Activated T-helper 1 cell treated with anti-CD3 and anti-CD28 coated beads, Interleukin-12 subunit alpha, Interleukin-12 subunit beta, Interleukin-2, Interleukin-4 antibody, amounts not matched to agents 30 ng/mL and 10 ng/mL and 1 ng/mL, durations not matched to agents 14 hours and 24 hours and 36 hours (primary cell): ENCODE measurements at regions of chr19 and their contacts with region 1.

Region 1: DNA sequence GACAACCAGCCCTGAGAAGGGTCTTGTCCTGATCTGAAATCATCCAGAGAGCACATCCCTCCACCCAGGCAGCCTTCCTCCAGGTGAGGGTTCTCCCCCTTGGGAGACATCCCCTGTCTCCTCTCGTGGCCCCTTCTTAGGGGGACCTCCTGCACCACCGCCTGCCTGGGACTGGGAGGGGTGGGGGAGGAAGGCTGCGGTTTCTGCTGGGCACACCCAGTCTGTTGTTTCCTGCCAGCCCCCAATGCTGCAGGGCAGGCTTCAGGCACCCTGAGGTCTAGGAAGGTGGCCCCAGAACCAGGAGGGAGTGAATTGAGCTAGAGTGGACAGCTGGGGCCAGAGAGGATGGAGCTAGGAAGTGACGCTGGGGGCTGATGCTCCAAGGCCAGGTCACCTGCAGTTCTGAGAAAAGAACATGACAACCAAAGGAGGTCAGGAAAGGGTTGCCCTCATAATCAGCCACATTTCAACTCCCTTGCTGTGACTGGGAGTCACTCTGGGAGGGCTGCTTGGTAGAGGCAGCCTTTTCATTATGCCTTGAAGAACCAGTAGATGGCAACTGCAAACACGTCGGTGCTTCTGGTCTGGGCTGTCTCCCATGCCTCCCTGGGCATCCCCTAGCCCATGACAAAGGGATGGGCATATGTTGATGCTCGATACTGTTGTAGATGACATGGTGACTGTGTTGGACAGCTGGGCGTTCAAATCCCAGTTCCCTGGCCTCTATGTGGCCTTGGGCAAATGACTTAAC is 1.4 kb downstream of the ARHGEF18 start:
- DNase-seq: no peak
- H3K4me3 Mint-ChIP-seq: peak overlapping the region; percentile 87
- H3K27ac Mint-ChIP-seq: peak overlapping the region; percentile 78
- H3K4me1 Mint-ChIP-seq: peaks cover 67% of the 10 kb centered on the region
- H3K27me3 Mint-ChIP-seq: no peaks in the 10 kb centered on the region

Region 2: DNA sequence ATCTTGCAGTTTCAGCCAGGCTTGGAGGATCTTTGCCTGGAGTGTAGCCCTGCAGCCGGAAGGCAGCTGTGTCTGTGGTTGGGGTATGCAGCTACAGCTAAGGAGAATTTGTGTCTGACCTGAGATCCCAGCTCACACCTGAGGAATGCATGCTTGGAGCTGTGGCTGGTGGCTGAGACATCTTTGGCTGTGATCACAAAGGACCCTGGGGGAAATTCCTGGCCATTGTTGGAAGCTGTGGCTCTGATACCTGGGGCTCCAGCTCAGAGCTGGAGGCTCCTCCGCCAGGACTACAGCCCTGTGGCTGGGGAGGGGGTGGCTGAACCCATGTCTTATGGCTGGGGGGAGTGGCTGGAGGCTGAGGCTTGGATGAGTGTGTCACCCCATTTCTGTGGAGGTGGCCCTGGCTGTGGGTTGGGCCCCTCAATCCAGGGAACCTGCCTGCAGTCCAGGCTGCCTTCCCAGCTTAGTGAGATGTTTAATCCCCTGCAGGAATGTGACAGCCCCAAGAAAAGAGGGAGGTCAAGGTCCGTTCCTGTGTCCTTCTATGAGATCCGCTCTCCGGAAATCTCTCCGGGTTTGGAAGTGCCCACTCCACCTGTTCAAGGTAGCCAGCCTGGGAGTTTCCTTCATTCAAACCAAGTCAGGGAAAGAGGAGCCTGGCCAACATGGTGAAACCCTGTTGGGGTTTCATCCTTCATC is 26.2 kb after region 1 on chr19:
- intact Hi-C with region 1: loop called (anchors 1 kb)
- DNase-seq: no peak
- H3K4me3 Mint-ChIP-seq: no peak overlapping the region
- H3K27ac Mint-ChIP-seq: no peak overlapping the region
- H3K4me1 Mint-ChIP-seq: no peaks in the 10 kb centered on the region
- H3K27me3 Mint-ChIP-seq: no peaks in the 10 kb centered on the region

Region 3: DNA sequence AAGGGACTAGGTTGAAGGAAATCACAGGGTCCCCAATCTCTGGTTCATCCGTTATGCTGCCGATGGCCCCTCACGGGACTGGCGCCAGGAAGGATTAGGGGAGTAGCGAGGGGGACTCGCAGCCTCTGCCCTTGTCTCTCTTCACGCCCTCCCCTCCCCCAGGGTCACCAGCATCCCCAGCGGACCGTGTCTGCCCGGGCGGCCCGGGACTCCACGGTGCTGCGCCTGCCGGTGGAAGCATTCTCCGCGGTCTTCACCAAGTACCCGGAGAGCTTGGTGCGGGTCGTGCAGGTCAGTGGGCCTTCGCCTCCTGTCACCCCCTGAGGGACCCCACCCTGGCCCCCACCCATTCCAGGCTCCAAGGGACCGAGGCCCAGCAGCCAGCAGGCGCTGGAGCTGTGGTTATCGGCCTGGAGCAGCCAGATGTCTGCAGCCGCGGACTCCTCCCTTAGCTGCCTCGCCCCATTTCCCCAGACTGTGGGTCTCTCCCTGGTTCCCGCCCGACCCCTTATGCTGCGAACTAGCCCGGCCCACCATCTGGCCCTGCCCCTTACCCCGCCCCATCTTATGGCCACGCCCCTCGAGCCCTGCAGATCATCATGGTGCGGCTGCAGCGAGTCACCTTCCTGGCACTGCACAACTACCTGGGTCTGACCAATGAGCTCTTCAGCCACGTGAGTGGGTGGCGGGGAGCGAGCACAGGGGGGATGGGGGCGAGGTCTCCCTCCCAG is 190.8 kb after region 1 on chr19:
- intact Hi-C with region 1: no loop called
- DNase-seq: no peak
- H3K4me3 Mint-ChIP-seq: no peak overlapping the region
- H3K27ac Mint-ChIP-seq: no peak overlapping the region
- H3K4me1 Mint-ChIP-seq: peaks cover 27% of the 10 kb centered on the region
- H3K27me3 Mint-ChIP-seq: no peaks in the 10 kb centered on the region

Region 4: DNA sequence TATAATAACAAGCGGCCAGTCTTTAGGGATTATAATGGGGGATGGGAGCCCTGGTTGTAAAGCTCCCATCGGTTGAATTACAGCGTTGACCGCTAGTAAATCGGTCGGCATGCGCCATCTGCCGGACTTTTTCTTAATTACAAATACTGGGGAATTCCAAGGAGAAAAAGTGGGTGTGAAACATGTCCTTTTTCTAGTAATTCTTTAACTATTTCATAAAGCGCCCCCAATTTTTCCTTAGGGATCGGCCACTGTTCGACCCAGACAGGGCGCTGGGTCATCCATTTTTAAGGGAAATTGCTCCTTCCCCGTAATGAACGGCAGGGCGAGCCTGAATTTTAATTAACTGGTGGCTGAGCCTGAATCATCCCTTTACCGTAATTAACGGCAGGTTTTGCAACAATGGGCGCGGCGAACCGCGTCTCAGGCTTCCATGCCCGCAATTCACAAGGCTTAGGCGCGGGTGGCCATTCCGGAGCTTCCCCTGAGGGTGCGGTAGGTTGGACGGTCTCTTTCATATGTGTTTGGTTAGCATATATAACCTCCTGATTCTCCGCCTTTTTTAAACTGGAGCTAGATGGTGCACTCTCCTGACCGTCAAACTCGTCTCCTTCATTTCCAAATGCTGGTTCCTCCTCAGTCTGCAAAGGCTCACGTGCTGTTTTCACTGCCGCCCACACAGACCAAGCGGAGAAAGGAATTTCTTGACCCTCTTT is 449.7 kb after region 1 on chr19:
- intact Hi-C with region 1: loop called (anchors 10 kb)
- DNase-seq: peak; percentile 37
- H3K4me3 Mint-ChIP-seq: no peak overlapping the region
- H3K27ac Mint-ChIP-seq: no peak overlapping the region
- H3K4me1 Mint-ChIP-seq: peaks cover 11% of the 10 kb centered on the region
- H3K27me3 Mint-ChIP-seq: peaks cover 36% of the 10 kb centered on the region